Body of pancreas (tissue), 4 donors: ENCODE measurements at regions of chr1 and their contacts with region 1.

Region 1: DNA sequence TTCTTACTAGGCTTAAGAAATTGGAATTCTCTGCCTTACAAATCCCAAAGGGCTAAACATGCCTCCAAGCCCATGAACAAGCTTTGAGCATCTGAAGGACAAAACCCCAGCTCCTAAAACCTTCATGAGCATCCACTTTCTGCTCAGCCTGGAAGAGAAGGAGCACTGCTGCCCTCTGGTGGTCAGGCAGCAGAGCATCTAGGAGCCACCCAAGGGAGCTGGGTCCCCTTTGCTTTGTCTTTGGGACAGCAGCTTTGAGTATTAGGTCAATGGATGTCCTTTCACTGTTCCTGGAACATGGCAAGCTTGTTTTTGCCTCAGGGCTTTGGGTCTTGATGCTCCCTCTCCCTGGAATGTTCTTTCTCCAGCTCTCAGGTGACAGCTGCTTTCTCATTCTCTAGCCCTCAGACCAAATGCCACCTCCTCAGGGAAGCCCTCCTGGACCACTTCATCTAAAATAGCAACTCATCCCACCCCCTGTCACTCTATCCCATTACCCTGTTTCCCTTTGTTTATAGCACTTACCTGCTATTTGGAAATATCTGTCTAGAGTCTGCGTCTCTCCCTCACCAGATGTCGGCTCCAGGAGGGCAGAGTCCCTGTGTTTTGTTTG is 25.7 kb downstream of the RAB7B start:
- DNase-seq: peak; percentile 75 to 76 (median 76)
- ATAC-seq: peak; percentile 85
- H3K4me3 ChIP-seq: no peak overlapping the region
- H3K27ac ChIP-seq: no peak overlapping the region
- H3K4me1 ChIP-seq: peaks cover 11% of the 10 kb centered on the region
- H3K27me3 ChIP-seq: no peaks in the 10 kb centered on the region
- CTCF ChIP-seq: peak; percentile 90 to 96 (median 94)
- POLR2A ChIP-seq: no peak

Region 2: GRCh38 chr1:205668951-205669340 is 308.6 kb before region 1 on chr1:
- intact Hi-C with region 1: loop called (anchors 10 kb)
- DNase-seq: no peak
- ATAC-seq: no peak
- H3K4me3 ChIP-seq: no peak overlapping the region
- H3K27ac ChIP-seq: no peak overlapping the region
- H3K4me1 ChIP-seq: peaks cover 18% of the 10 kb centered on the region
- H3K27me3 ChIP-seq: no peaks in the 10 kb centered on the region
- CTCF ChIP-seq: no peak
- POLR2A ChIP-seq: no peak

Region 3: GRCh38 chr1:205750138-205751035 is 227.1 kb before region 1 on chr1 and contains the start of gene NUCKS1:
- intact Hi-C with region 1: no loop called
- DNase-seq: peak; percentile 98 to 100 (median 100)
- ATAC-seq: peak; percentile 92
- H3K4me3 ChIP-seq: peak within 1 kb of the TSS; percentile 38 to 75
- H3K27ac ChIP-seq: peak within 1 kb of the TSS; percentile 96 to 98 (median 98)
- H3K4me1 ChIP-seq: peaks cover 23% of the 10 kb centered on the region
- H3K27me3 ChIP-seq: no peaks in the 10 kb centered on the region
- CTCF ChIP-seq: peak in 4 of 7 experiments; percentile 10 to 49 (median 46)
- POLR2A ChIP-seq: peak in 2 of 3 donors; percentile 64 to 69
- total RNA-seq, gene NUCKS1: 37.6 to 39.2 TPM

Region 4: DNA sequence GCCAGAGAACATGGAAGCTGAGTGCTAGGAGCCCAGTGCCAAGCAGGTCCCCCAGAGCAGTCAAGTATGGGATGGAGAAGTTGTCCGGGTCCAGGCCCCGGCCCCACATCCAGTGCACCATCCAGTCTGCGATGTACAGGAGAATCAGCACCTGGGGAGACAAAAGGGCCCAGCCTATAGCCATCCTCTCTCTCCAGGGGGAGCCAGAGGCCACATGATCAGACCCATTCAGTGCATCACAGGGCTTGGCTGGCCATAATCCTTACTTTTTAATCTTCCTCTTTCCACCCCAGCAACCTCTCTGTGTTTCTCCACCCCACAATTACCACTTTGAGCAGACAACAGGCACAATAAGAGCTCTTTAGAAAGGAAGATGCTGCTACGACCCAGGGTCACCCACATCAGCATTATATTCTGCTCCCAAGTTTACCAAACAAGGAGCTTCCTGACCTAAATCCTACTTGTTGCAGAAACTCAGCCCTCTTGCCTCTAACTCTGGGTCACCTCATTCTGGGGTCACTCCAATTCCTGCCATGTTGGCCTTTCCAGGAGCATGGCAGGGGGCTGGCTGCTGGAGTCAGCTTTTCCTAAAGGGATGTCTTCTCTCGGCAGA is 185.8 kb before region 1 on chr1:
- intact Hi-C with region 1: loop called (anchors 5 kb)
- DNase-seq: peak; percentile 69 to 79 (median 76)
- ATAC-seq: peak; percentile 86
- H3K4me3 ChIP-seq: no peak overlapping the region
- H3K27ac ChIP-seq: no peak overlapping the region
- H3K4me1 ChIP-seq: no peaks in the 10 kb centered on the region
- H3K27me3 ChIP-seq: no peaks in the 10 kb centered on the region
- CTCF ChIP-seq: peak; percentile 62 to 89 (median 85)
- POLR2A ChIP-seq: no peak

Region 5: DNA sequence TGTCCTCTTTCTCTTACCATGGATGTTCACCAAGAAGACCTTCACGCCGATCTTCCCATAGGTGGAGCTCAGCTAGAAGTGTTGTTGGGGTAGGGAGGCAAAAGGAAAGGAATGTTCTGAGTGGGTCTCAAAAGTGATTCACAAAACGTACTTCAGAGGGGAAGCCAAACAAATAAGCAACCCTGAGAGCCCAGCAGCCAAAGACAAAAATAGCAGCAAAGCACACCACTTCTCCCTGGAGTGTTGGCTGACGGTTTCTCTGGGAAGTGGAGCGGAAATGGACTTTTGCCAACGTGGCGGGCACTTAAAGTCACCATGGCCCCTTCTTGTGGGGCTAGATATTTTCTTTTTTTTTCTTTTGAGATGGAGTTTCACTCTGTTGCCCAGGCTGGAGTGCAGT is 57.3 kb before region 1 on chr1:
- intact Hi-C with region 1: loop called (anchors 5 kb)
- DNase-seq: peak in 1 of 4 donors; percentile 11
- ATAC-seq: no peak
- H3K4me3 ChIP-seq: no peak overlapping the region
- H3K27ac ChIP-seq: no peak overlapping the region
- H3K4me1 ChIP-seq: peaks cover 32% of the 10 kb centered on the region
- H3K27me3 ChIP-seq: no peaks in the 10 kb centered on the region
- CTCF ChIP-seq: no peak
- POLR2A ChIP-seq: no peak